GM10248 (cell line): ENCODE measurements at regions of chr6 and their contacts with region 1.

Region 1: DNA sequence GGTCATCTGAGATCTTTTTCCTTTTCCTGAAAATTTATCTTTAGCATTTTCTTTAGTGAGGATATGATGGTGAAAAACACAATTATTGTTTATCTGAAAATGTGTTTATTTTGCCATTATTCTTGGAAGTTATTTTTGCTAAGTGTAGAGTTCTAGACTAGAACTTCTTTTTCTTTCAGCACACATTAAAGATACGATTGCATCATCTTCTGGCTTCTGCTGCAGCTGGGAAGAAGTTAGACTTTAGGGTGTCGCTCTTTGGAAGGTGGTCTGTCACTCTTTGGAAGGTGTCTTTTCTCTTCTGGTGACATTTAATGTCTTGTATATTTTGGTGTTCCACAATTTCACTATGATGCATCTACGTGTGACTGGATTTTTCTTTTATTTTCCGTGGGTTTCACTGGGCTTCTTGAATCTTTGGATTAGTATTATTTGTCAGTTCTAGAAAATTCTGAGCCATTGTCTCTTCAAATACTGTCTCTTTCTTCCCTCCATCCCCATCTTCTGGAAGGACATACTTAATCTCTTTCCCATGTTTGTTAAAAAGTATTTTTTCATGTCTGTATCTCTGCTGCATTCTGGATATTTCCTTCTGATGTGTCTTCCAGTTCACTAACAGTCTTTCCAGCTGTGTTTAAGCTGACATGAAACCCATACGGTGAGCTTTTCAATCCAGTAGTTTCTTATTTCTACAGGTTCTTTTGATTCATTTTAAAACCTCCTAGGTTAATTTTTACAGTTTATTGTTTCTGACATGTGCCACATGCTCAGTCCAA is 81.0 kb downstream of the AGPAT4 start:
- DNase-seq: no peak
- CTCF ChIP-seq: no peak

Region 2: GRCh38 chr6:160950507-160950906 is 242.3 kb before region 1 on chr6:
- CTCF ChIA-PET with region 1: no interaction called
- POLR2A ChIA-PET with region 1: no interaction called
- DNase-seq: no peak
- CTCF ChIP-seq: no peak

Region 3: GRCh38 chr6:161181121-161181520 is 11.7 kb before region 1 on chr6:
- CTCF ChIA-PET with region 1: interaction called, 13 read pairs
- POLR2A ChIA-PET with region 1: no interaction called
- DNase-seq: no peak
- CTCF ChIP-seq: no peak